Activated CD4-positive, alpha-beta memory T cell treated with anti-CD3 and anti-CD28 coated beads for 36 hours (primary cell): ENCODE measurements at regions of chr6 and their contacts with region 1.

Region 1: DNA sequence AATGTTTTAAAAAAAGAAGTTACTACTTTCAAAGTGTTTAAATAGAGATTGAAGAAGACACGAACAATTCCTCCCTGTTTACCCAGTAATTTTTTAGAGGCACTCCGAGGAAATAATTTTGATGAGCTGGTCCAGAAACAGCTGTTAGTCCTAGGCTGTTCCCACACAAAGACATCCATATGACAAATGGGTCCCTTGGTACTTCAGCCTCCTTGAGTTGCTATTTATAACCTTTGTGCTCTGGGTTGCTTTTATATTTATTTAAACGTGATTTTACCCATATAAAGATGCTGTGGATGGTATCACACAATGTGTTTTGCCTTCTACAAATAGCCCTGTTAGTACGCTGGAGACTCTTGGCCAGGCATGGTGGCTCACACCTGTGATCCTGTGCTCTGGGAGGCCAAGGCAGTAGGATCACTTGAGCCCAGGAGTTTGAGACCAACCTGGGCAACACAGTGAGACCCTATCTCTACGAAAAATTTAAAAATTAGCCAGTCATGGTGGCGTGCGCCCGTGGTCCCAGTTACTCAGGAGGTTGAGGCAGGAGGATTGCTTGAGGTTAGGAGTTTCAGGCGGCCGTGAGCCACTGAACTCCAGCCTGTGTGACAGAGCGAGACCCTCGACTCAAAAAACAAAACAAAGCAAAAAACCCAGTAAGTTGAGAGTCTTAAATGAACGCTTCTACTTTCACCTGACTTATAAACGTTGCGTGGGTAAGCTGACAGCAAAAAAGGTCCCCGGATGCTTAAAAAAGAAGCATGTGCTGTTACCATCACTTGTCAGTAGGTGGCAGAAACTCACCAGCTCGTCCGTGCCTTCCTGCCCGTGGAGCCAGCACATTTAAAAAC is 56.9 kb upstream of the ARMH2 start:
- DNase-seq: peak; percentile 81
- H3K4me3 Mint-ChIP-seq: peak overlapping the region; percentile 17
- H3K27ac Mint-ChIP-seq: peak overlapping the region; percentile 89
- H3K4me1 Mint-ChIP-seq: peaks cover 56% of the 10 kb centered on the region
- H3K27me3 Mint-ChIP-seq: no peaks in the 10 kb centered on the region

Region 2: GRCh38 chr6:24883618-24884017 is 28.0 kb after region 1 on chr6:
- CTCF ChIA-PET with region 1: interaction called, 27 read pairs
- POLR2A ChIA-PET with region 1: interaction called, 4 read pairs
- intact Hi-C with region 1: loop called (anchors 1 kb)
- DNase-seq: peak; percentile 62
- H3K4me3 Mint-ChIP-seq: peak overlapping the region; percentile 66
- H3K27ac Mint-ChIP-seq: peak overlapping the region; percentile 97
- H3K4me1 Mint-ChIP-seq: peaks cover 86% of the 10 kb centered on the region
- H3K27me3 Mint-ChIP-seq: no peaks in the 10 kb centered on the region

Region 3: DNA sequence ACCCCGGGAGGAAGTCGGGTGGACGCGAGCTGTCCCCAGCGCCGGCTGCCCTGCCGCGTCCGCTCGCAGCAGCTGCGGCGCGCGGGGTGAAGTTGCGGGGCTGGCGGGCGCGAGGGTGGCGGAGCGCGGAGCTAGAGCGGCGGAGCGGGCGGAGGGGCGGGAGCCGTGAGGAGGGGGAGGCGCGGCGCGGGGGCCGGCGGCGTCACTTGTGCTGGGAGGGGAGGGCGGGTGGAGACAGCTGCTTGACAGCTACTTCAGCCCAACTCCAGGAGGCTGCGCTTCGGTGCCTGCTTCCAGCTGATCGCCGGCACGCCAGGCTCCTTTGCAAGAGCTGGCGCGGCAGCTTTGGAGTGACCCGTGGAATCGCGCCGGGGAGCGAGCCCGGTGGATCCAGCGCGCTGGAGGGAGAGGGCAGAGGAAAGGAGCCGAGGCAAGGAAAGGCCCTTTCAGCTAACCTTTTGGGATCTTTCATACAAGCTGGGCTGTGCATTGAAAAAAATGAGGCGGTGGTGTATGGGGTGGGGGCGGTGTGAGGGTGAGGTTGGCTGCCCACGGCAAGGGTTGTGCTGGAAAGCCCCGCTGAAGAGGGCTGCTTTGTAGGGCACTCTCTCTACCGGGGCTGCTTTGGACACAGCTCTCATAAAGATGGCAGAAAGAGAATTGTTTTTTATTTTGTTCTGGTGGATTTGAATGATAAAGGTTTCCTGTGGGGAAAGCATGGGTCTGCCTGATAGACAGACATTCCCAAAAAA is 55.5 kb after region 1 on chr6:
- CTCF ChIA-PET with region 1: interaction called, 12 read pairs
- POLR2A ChIA-PET with region 1: interaction called, 24 read pairs
- intact Hi-C with region 1: loop called (anchors 2 kb)
- DNase-seq: peak; percentile 70
- H3K4me3 Mint-ChIP-seq: peak overlapping the region; percentile 91
- H3K27ac Mint-ChIP-seq: peak overlapping the region; percentile 95
- H3K4me1 Mint-ChIP-seq: peaks cover 85% of the 10 kb centered on the region
- H3K27me3 Mint-ChIP-seq: no peaks in the 10 kb centered on the region

Region 4: GRCh38 chr6:24927985-24928745 is 72.5 kb after region 1 on chr6:
- CTCF ChIA-PET with region 1: interaction called, 91 read pairs
- POLR2A ChIA-PET with region 1: interaction called, 5 read pairs
- intact Hi-C with region 1: loop called (anchors 1 kb)
- DNase-seq: no peak
- H3K4me3 Mint-ChIP-seq: peak overlapping the region; percentile 80
- H3K27ac Mint-ChIP-seq: peak overlapping the region; percentile 97
- H3K4me1 Mint-ChIP-seq: peaks cover 81% of the 10 kb centered on the region
- H3K27me3 Mint-ChIP-seq: peaks cover 2% of the 10 kb centered on the region

Region 5: GRCh38 chr6:25006565-25007001 is 151.0 kb after region 1 on chr6:
- CTCF ChIA-PET with region 1: interaction called, 7 read pairs
- POLR2A ChIA-PET with region 1: interaction called, 6 read pairs
- intact Hi-C with region 1: loop called (anchors 1 kb)
- DNase-seq: peak; percentile 66
- H3K4me3 Mint-ChIP-seq: peak overlapping the region; percentile 10
- H3K27ac Mint-ChIP-seq: peak overlapping the region; percentile 78
- H3K4me1 Mint-ChIP-seq: peaks cover 77% of the 10 kb centered on the region
- H3K27me3 Mint-ChIP-seq: no peaks in the 10 kb centered on the region